Cardiac septum (tissue), 1 donor: ENCODE measurements at regions of chr17 and their contacts with region 1.

Region 1: GRCh38 chr17:27578718-27579085 is 52.3 kb upstream of the LGALS9 start:
- DNase-seq: no peak

Region 2: GRCh38 chr17:27381007-27381501 is 197.6 kb before region 1 on chr17:
- intact Hi-C with region 1: loop called (anchors 5 kb)
- DNase-seq: peak; percentile 86

Region 3: DNA sequence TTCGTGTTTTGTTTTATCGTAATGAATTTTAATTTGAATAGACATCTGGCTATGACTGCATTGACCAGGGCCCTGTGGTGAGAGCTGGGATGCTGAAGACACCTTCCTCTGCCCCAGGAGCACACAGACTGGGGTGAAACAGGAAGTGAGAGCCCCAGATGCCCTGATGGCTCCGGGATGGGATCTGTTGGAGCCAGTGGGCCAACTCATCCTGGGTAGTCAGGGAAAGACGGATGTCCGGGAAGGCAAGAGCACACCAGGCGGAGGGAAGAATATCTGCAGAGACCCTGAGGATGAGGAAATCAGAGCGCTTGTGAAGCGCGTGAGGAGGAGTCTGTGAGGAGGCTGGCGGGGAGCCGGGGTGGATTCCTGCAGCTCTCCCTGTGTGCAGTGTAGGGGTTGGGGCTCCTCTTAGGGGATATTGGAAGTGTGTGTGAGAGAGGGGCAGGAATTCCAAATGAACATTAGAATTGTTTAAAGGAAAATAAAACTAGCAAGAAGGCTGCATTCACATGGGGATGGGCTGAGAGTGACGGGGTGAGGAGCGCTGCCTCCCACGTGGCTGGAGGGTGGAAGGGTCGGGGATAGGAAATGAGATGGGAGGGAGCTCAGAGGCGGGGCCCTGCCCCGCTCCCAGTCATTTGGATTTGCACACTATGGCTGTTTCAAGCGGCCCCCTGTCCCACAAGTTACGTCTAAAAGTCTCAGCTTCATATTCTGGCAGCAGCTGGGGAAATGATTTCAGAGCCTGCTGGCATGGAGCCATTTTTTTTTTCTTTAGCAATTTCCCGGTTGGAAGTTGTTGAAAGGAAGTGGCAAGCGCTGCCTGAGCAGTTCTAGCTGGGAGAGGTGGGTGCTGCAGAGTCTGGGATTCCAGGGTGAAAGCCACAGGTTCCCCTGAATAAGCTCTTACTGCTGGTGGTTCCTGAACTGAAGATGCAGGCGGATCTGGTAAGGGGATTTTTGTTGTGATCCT is 18.9 kb before region 1 on chr17:
- intact Hi-C with region 1: no loop called
- DNase-seq: no peak

Region 4: DNA sequence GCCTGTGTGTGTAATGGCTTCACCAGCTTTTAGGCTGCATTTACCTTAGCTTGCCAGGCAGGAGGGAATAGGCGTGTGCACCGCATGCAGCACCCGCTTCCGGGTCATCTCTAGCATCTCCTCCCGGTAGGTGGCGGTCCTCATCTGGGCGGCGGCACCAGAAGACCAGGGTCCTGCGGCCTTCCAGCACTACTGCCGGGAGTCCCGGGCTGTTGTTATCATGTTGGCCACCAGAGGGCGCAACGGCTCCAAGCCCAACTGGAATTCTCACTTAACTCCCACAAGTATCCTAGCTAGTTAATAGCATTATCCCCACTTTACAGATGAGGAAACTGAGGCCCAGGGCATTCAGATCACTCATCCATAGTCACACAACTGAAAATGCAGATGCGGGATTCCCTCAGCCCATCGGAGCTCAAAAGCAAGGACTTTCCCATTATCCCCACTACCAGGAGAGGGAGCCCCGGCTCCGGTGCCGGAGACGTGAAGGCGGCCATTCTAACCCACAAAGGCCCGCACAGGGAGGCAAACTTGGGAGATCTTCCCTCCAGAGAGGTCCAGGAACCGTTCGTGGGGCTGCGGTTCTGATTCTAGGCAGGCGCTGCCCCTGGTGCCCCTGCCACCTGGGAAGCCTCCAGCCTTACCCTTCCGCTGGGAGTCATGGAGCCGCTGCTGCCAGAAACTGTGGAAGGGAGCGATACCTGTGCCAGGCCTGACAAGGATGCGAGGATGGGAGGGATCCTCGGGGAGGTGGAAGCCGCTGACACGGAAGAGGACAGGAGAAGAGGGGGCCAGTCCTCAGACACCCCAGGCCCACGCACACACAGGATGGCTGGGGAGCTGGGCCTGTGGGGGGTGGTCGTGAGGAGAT is 76.2 kb after region 1 on chr17:
- intact Hi-C with region 1: no loop called
- DNase-seq: peak; percentile 86